T-cell (primary cell): ENCODE measurements at regions of chr10 and their contacts with region 1.

Region 1: DNA sequence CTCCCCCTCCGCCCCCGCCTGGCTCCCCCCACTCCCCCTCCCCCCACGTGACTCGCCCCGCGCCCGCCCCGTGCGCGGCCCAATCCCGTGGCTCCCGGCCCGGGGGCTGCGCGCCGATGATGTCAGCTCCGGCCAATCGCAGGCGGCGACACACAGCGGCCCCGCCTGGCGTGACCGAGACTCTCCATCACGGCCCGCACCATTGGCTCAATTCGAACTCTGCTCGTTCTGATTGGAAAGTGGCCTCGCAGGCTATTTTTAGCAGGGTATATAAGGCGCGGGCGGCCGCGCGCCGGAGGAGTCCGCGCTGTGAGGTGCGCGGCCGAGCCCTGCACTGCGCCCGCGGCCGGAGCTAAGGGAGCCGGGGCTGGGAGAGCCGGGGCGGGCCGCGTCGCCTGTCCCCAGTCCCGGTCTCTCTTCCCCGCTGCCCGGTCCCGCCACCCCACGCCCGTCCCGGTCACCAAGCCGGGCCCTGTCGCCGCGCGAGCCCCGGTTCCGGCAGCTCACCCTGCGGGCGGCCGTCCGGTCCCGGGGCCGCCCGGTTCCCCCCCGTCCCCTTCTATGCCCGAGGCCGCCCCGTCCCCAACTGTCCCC is 345 bp upstream of the KLF6 start:
- DNase-seq: peak; percentile 97 to 100 (median 99)
- ATAC-seq: peak; percentile 79 to 88 (median 82)
- H3K4me3 ChIP-seq: peak overlapping the region; percentile 67 to 72
- H3K4me3 Mint-ChIP-seq: peak overlapping the region; percentile 95 to 100 (median 98)
- H3K27ac ChIP-seq: peak overlapping the region; percentile 99
- H3K27ac Mint-ChIP-seq: peak overlapping the region; percentile 96 to 98
- H3K4me1 ChIP-seq: peaks cover 12 to 35% of the 10 kb centered on the region in 2 experiments
- H3K4me1 Mint-ChIP-seq: peaks cover 30 to 39% (median 31%) of the 10 kb centered on the region in 3 donors
- H3K27me3 ChIP-seq: no peaks in the 10 kb centered on the region
- H3K27me3 Mint-ChIP-seq: no peaks in the 10 kb centered on the region

Region 2: GRCh38 chr10:3647074-3647473 is 138.3 kb before region 1 on chr10:
- CTCF ChIA-PET with region 1: no interaction called
- POLR2A ChIA-PET with region 1: no interaction called
- DNase-seq: no peak
- ATAC-seq: no peak
- H3K4me3 ChIP-seq: no peak overlapping the region
- H3K4me3 Mint-ChIP-seq: no peak overlapping the region
- H3K27ac ChIP-seq: no peak overlapping the region
- H3K27ac Mint-ChIP-seq: no peak overlapping the region
- H3K4me1 ChIP-seq: no peaks in the 10 kb centered on the region
- H3K4me1 Mint-ChIP-seq: peaks cover 0 to 2% (median 0%) of the 10 kb centered on the region in 3 donors
- H3K27me3 ChIP-seq: peaks cover 0 to 2% of the 10 kb centered on the region in 2 experiments
- H3K27me3 Mint-ChIP-seq: peaks cover 0 to 5% of the 10 kb centered on the region in 2 donors

Region 3: GRCh38 chr10:3805791-3806461 is 20.6 kb after region 1 on chr10:
- CTCF ChIA-PET with region 1: interaction called in 1 of 2 experiments, 3 read pairs
- POLR2A ChIA-PET with region 1: interaction called, 14 to 240 read pairs
- DNase-seq: peak in 13 of 35 experiments; percentile 12 to 67 (median 33)
- ATAC-seq: peak in 3 of 4 experiments; percentile 16 to 19 (median 17)
- H3K4me3 ChIP-seq: no peak overlapping the region
- H3K4me3 Mint-ChIP-seq: peak overlapping the region; percentile 39 to 75 (median 70)
- H3K27ac ChIP-seq: peak overlapping the region; percentile 98
- H3K27ac Mint-ChIP-seq: no peak overlapping the region
- H3K4me1 ChIP-seq: peaks cover 63 to 86% of the 10 kb centered on the region in 2 experiments
- H3K4me1 Mint-ChIP-seq: peaks cover 5 to 77% (median 65%) of the 10 kb centered on the region in 3 donors
- H3K27me3 ChIP-seq: no peaks in the 10 kb centered on the region
- H3K27me3 Mint-ChIP-seq: no peaks in the 10 kb centered on the region

Region 4: GRCh38 chr10:3828404-3829155 is 43.2 kb after region 1 on chr10:
- CTCF ChIA-PET with region 1: no interaction called
- POLR2A ChIA-PET with region 1: interaction called, 3 to 32 read pairs
- DNase-seq: peak in 2 of 35 experiments; percentile 10 to 71
- ATAC-seq: peak; percentile 50 to 73 (median 60)
- H3K4me3 ChIP-seq: peak overlapping the region; percentile 6 to 35
- H3K4me3 Mint-ChIP-seq: peak overlapping the region; percentile 69 to 79 (median 73)
- H3K27ac ChIP-seq: peak overlapping the region; percentile 85
- H3K27ac Mint-ChIP-seq: peak overlapping the region; percentile 88 to 91
- H3K4me1 ChIP-seq: peaks cover 6 to 16% of the 10 kb centered on the region in 2 experiments
- H3K4me1 Mint-ChIP-seq: peaks cover 33 to 37% (median 35%) of the 10 kb centered on the region in 3 donors
- H3K27me3 ChIP-seq: no peaks in the 10 kb centered on the region
- H3K27me3 Mint-ChIP-seq: no peaks in the 10 kb centered on the region

Region 5: DNA sequence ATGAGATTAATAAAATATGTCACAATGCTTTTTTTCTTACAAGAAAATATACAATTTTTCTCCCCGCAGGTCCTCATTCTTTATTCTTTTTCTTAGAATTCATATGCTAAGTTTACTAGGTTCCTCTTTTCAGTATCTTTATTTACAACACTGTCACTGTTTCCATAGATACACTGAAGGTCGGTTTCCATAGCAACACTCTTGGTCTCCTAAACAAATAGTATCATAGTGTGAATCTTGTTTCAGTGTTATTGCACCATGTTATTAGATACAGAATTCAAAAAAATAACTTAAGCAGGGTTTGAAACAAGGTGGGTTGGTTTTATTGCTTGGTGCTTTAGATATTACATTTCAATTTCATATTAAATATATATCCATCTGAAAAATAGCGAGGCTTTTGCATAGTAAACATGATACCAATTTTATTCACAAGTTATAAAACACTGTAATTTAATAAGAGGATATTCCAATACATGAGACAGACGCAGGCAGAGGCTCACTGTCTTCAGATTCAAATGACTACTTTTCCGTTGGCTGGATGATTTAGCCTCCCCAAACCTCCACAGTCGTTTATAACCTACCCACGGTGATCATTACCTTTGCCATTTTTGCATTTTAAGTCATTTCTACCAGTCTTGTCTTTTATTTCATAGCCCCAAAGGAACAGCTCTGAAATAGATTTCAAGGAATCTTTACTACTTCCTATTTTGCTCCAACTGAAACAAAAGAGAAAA is 88.5 kb after region 1 on chr10:
- CTCF ChIA-PET with region 1: interaction called in 1 of 2 experiments, 5 read pairs
- POLR2A ChIA-PET with region 1: interaction called, 14 to 110 read pairs
- DNase-seq: peak in 9 of 35 experiments; percentile 13 to 87 (median 25)
- ATAC-seq: peak in 3 of 4 experiments; percentile 24 to 70 (median 55)
- H3K4me3 ChIP-seq: no peak overlapping the region
- H3K4me3 Mint-ChIP-seq: peak overlapping the region in 2 of 3 donors; percentile 9 to 25
- H3K27ac ChIP-seq: peak overlapping the region; percentile 98
- H3K27ac Mint-ChIP-seq: peak overlapping the region; percentile 81 to 99
- H3K4me1 ChIP-seq: peaks cover 36 to 42% of the 10 kb centered on the region in 2 experiments
- H3K4me1 Mint-ChIP-seq: peaks cover 57 to 70% (median 62%) of the 10 kb centered on the region in 3 donors
- H3K27me3 ChIP-seq: no peaks in the 10 kb centered on the region
- H3K27me3 Mint-ChIP-seq: no peaks in the 10 kb centered on the region

Region 6: GRCh38 chr10:3950676-3951275 is 165.4 kb after region 1 on chr10:
- CTCF ChIA-PET with region 1: interaction called in 1 of 2 experiments, 10 read pairs
- POLR2A ChIA-PET with region 1: interaction called in 1 of 2 experiments, 11 read pairs
- DNase-seq: peak in 29 of 35 experiments; percentile 17 to 82 (median 37)
- ATAC-seq: peak; percentile 53 to 67 (median 64)
- H3K4me3 ChIP-seq: no peak overlapping the region
- H3K4me3 Mint-ChIP-seq: no peak overlapping the region
- H3K27ac ChIP-seq: peak overlapping the region; percentile 50
- H3K27ac Mint-ChIP-seq: peak overlapping the region; percentile 48 to 88
- H3K4me1 ChIP-seq: peaks cover 13 to 46% of the 10 kb centered on the region in 2 experiments
- H3K4me1 Mint-ChIP-seq: peaks cover 33 to 65% (median 50%) of the 10 kb centered on the region in 3 donors
- H3K27me3 ChIP-seq: no peaks in the 10 kb centered on the region
- H3K27me3 Mint-ChIP-seq: no peaks in the 10 kb centered on the region

Region 7: GRCh38 chr10:4344511-4344994 is 559.2 kb after region 1 on chr10:
- CTCF ChIA-PET with region 1: no interaction called
- POLR2A ChIA-PET with region 1: no interaction called
- DNase-seq: no peak
- ATAC-seq: no peak
- H3K4me3 ChIP-seq: no peak overlapping the region
- H3K4me3 Mint-ChIP-seq: no peak overlapping the region
- H3K27ac ChIP-seq: no peak overlapping the region
- H3K27ac Mint-ChIP-seq: no peak overlapping the region
- H3K4me1 ChIP-seq: no peaks in the 10 kb centered on the region
- H3K4me1 Mint-ChIP-seq: no peaks in the 10 kb centered on the region
- H3K27me3 ChIP-seq: no peaks in the 10 kb centered on the region
- H3K27me3 Mint-ChIP-seq: peaks cover 0 to 3% of the 10 kb centered on the region in 2 donors